ENCODE measurements at regions of chr4 and their contacts with region 1.

Region 1: GRCh38 chr4:75895744-75896314 is 6.4 kb downstream of the PPEF2 start:
- DNase-seq: no peak
- ATAC-seq: peak; percentile 70
- H3K4me3 Mint-ChIP-seq: no peak overlapping the region
- H3K27ac Mint-ChIP-seq: no peak overlapping the region
- H3K4me1 Mint-ChIP-seq: no peaks in the 10 kb centered on the region
- H3K27me3 Mint-ChIP-seq: no peaks in the 10 kb centered on the region
- CTCF ChIP-seq: no peak

Region 2: DNA sequence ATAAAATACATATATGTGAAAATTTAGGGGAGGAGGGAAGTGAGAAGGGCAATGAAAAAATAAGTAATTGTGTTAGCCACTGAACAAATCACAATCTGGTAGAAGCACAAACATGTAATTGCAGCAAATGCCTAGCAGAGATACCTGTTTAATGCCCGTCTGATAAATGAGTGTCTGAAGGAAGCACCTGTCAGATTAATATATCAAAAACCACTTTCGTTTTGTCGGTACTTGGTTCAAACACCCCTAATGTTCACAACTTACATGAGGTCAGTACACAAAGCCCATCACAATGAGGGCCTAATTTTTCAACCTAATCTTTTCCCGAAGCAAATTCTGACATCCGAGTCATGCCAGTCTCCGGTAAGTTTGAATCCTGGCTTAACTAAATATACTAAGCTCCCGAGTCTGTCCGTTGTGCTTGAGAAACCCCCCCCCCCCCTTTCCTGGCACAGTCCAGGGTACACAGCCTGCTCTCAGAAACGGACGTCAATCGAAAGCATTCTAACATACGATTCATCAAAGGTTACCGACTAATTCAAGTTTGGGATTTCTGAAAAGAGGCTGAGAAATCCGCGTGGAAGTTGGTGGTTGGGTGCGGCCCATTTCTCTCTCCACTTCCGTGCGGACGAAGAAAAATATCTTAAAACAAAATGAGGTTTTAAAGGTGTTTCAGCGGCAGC is 94.2 kb after region 1 on chr4:
- CTCF ChIA-PET with region 1: interaction called, 6 read pairs
- POLR2A ChIA-PET with region 1: interaction called, 5 read pairs
- intact Hi-C with region 1: loop called (anchors 2 kb)
- DNase-seq: no peak
- ATAC-seq: no peak
- H3K4me3 Mint-ChIP-seq: peak overlapping the region; percentile 95
- H3K27ac Mint-ChIP-seq: peak overlapping the region; percentile 86
- H3K4me1 Mint-ChIP-seq: peaks cover 34% of the 10 kb centered on the region
- H3K27me3 Mint-ChIP-seq: peaks cover 2% of the 10 kb centered on the region
- CTCF ChIP-seq: no peak

Region 3: GRCh38 chr4:76067652-76068286 is 171.9 kb after region 1 on chr4:
- CTCF ChIA-PET with region 1: interaction called, 7 read pairs
- POLR2A ChIA-PET with region 1: interaction called, 5 read pairs
- intact Hi-C with region 1: loop called (anchors 1 kb)
- DNase-seq: peak; percentile 25
- ATAC-seq: peak; percentile 87
- H3K4me3 Mint-ChIP-seq: no peak overlapping the region
- H3K27ac Mint-ChIP-seq: no peak overlapping the region
- H3K4me1 Mint-ChIP-seq: peaks cover 3% of the 10 kb centered on the region
- H3K27me3 Mint-ChIP-seq: no peaks in the 10 kb centered on the region
- CTCF ChIP-seq: no peak

Measured in activated B cell treated with CpG ODN at 0.5 μM for 24 hours (primary cell).